ENCODE measurements at regions of chr4 and their contacts with region 1.

Region 1: DNA sequence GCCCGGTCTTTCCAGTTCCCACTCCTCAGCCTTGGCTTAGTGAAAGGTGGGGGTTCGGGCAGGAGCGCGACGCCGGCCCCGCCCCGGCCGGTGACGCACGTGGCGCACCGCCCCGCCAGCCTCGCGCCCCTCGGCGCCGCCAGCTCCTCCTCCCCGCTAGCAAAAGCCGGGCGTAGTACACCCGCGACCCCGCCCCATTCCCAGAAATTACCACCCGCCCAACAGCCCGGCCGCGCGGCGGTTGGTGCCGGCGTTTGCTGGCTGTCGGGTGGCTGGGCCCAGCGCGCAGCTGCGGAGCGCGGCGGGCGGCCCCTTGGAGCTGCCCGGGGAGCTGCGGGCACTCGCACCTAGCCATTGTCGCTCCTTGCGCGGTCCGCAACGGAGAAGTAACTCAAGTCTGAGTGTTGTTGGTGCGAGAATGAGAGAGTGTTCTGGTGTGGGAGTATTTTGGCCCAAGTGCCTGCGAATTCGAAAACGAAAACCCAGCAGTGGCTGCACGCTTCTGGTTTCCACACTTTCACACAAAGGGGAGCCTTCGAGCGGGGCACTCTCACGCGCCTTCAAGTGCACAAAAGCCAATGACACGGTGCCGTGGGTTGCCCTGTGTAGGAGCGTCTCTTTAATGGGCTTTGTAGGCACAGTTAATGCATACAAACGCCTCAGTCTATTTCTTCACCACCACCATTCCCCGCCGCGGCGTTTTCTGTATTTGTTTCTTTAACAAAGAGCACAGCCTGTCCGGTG is 1.0 kb upstream of the ELF2 start:
- DNase-seq: peak; percentile 84 to 98 (median 92)
- ATAC-seq: peak; percentile 84
- H3K4me3 ChIP-seq: peak overlapping the region; percentile 71
- H3K4me3 Mint-ChIP-seq: peak overlapping the region; percentile 86 to 95 (median 91)
- H3K27ac ChIP-seq: peak overlapping the region; percentile 86
- H3K27ac Mint-ChIP-seq: peak overlapping the region; percentile 90 to 97 (median 94)
- H3K4me1 ChIP-seq: peaks cover 0 to 11% of the 10 kb centered on the region in 2 donors
- H3K4me1 Mint-ChIP-seq: peaks cover 0 to 31% (median 17%) of the 10 kb centered on the region in 7 donors
- H3K27me3 ChIP-seq: no peaks in the 10 kb centered on the region
- H3K27me3 Mint-ChIP-seq: peaks cover 0 to 44% (median 0%) of the 10 kb centered on the region in 5 donors

Region 2: GRCh38 chr4:139015269-139015947 is 162.6 kb before region 1 on chr4 and contains the start of gene NOCT:
- CTCF ChIA-PET with region 1: no interaction called
- POLR2A ChIA-PET with region 1: interaction called, 4 read pairs
- intact Hi-C with region 1: loop called (anchors 1 kb)
- DNase-seq: peak; percentile 82 to 92 (median 89)
- ATAC-seq: peak; percentile 94
- H3K4me3 ChIP-seq: peak within 1 kb of the TSS; percentile 65
- H3K4me3 Mint-ChIP-seq: peak within 1 kb of the TSS; percentile 82 to 93 (median 88)
- H3K27ac ChIP-seq: peak within 1 kb of the TSS; percentile 91
- H3K27ac Mint-ChIP-seq: peak within 1 kb of the TSS; percentile 76 to 99 (median 94)
- H3K4me1 ChIP-seq: peaks cover 7 to 10% of the 10 kb centered on the region in 2 donors
- H3K4me1 Mint-ChIP-seq: peaks cover 14 to 44% (median 24%) of the 10 kb centered on the region in 7 donors
- H3K27me3 ChIP-seq: no peaks in the 10 kb centered on the region
- H3K27me3 Mint-ChIP-seq: no peaks in the 10 kb centered on the region
- total RNA-seq, gene NOCT: 1.6 to 33.7 (median 8.8) TPM

Region 3: DNA sequence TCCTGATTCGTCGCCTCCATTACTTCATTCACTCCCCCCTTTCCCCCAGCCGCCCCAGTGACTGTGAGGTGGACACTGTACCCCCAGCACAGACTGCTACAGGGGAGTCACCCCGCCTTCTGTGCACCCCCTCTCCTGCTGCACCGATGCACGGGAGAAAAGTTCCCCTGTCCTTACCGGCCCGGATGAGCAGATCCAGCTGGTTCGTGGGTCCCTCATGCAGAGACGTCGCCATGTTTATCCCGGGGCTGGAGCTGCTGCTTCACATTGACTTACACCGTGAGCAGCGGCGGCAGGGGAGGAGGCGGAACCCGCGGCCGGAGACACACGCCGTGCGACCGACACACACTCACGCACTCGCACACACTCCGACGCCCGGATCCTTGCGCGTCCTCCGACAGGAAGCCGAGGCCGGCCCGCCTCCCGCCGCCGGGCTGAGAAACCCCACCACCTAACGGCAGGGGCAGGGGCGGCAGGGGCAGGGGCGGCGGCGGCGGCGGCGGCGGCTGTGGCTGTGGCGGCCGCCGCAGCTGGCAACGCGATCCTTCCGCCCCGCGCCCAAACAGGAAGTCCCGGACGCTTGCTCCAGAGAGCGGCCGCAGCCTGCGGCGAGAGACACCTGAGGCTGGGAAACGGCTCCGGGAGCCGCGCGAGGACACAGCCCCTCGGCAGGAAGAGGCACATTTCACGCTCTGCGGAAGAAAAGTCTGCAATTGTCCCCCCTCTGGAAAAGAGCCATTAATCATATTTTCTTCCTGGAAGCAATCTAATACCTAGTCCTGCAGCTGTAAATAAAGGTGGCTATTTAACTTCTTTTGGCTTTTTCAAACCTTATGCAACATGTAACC is 93.9 kb before region 1 on chr4:
- CTCF ChIA-PET with region 1: no interaction called
- POLR2A ChIA-PET with region 1: interaction called, 18 read pairs
- intact Hi-C with region 1: loop called (anchors 1 kb)
- DNase-seq: peak; percentile 54 to 88 (median 84)
- ATAC-seq: peak; percentile 64
- H3K4me3 ChIP-seq: peak overlapping the region; percentile 99
- H3K4me3 Mint-ChIP-seq: peak overlapping the region; percentile 90 to 100 (median 92)
- H3K27ac ChIP-seq: peak overlapping the region; percentile 96
- H3K27ac Mint-ChIP-seq: peak overlapping the region; percentile 85 to 100 (median 96)
- H3K4me1 ChIP-seq: peaks cover 16 to 27% of the 10 kb centered on the region in 2 donors
- H3K4me1 Mint-ChIP-seq: peaks cover 16 to 49% (median 41%) of the 10 kb centered on the region in 7 donors
- H3K27me3 ChIP-seq: no peaks in the 10 kb centered on the region
- H3K27me3 Mint-ChIP-seq: no peaks in the 10 kb centered on the region

Region 4: GRCh38 chr4:139229534-139230039 is 51.5 kb after region 1 on chr4:
- CTCF ChIA-PET with region 1: interaction called, 3 read pairs
- POLR2A ChIA-PET with region 1: no interaction called
- intact Hi-C with region 1: loop called (anchors 1 to 2 kb)
- DNase-seq: peak in 7 of 9 donors; percentile 11 to 58 (median 37)
- ATAC-seq: peak; percentile 84
- H3K4me3 ChIP-seq: no peak overlapping the region
- H3K4me3 Mint-ChIP-seq: no peak overlapping the region
- H3K27ac ChIP-seq: no peak overlapping the region
- H3K27ac Mint-ChIP-seq: no peak overlapping the region
- H3K4me1 ChIP-seq: no peaks in the 10 kb centered on the region
- H3K4me1 Mint-ChIP-seq: peaks cover 0 to 7% (median 4%) of the 10 kb centered on the region in 7 donors
- H3K27me3 ChIP-seq: no peaks in the 10 kb centered on the region
- H3K27me3 Mint-ChIP-seq: no peaks in the 10 kb centered on the region

Region 5: GRCh38 chr4:139295206-139295941 is 117.3 kb after region 1 on chr4:
- CTCF ChIA-PET with region 1: interaction called, 4 read pairs
- POLR2A ChIA-PET with region 1: interaction called, 20 read pairs
- intact Hi-C with region 1: loop called (anchors 1 kb)
- DNase-seq: peak; percentile 90 to 99 (median 94)
- ATAC-seq: peak; percentile 99
- H3K4me3 ChIP-seq: peak overlapping the region; percentile 97
- H3K4me3 Mint-ChIP-seq: peak overlapping the region; percentile 86 to 100 (median 96)
- H3K27ac ChIP-seq: peak overlapping the region; percentile 94
- H3K27ac Mint-ChIP-seq: peak overlapping the region; percentile 93 to 100 (median 97)
- H3K4me1 ChIP-seq: peaks cover 13 to 28% of the 10 kb centered on the region in 2 donors
- H3K4me1 Mint-ChIP-seq: peaks cover 2 to 62% (median 40%) of the 10 kb centered on the region in 7 donors
- H3K27me3 ChIP-seq: no peaks in the 10 kb centered on the region
- H3K27me3 Mint-ChIP-seq: no peaks in the 10 kb centered on the region

Region 6: GRCh38 chr4:139656614-139657486 is 478.8 kb after region 1 on chr4:
- CTCF ChIA-PET with region 1: no interaction called
- POLR2A ChIA-PET with region 1: no interaction called
- intact Hi-C with region 1: loop called in 1 of 2 experiments (anchors 5 kb)
- DNase-seq: peak in 8 of 9 donors; percentile 29 to 67 (median 56)
- ATAC-seq: peak; percentile 87
- H3K4me3 ChIP-seq: no peak overlapping the region
- H3K4me3 Mint-ChIP-seq: peak overlapping the region in 8 of 10 donors; percentile 5 to 86 (median 22)
- H3K27ac ChIP-seq: no peak overlapping the region
- H3K27ac Mint-ChIP-seq: peak overlapping the region in 5 of 9 donors; percentile 31 to 98 (median 87)
- H3K4me1 ChIP-seq: peaks cover 0 to 5% of the 10 kb centered on the region in 2 donors
- H3K4me1 Mint-ChIP-seq: peaks cover 17 to 41% (median 18%) of the 10 kb centered on the region in 7 donors
- H3K27me3 ChIP-seq: no peaks in the 10 kb centered on the region
- H3K27me3 Mint-ChIP-seq: peaks cover 0 to 5% (median 5%) of the 10 kb centered on the region in 5 donors

Region 7: DNA sequence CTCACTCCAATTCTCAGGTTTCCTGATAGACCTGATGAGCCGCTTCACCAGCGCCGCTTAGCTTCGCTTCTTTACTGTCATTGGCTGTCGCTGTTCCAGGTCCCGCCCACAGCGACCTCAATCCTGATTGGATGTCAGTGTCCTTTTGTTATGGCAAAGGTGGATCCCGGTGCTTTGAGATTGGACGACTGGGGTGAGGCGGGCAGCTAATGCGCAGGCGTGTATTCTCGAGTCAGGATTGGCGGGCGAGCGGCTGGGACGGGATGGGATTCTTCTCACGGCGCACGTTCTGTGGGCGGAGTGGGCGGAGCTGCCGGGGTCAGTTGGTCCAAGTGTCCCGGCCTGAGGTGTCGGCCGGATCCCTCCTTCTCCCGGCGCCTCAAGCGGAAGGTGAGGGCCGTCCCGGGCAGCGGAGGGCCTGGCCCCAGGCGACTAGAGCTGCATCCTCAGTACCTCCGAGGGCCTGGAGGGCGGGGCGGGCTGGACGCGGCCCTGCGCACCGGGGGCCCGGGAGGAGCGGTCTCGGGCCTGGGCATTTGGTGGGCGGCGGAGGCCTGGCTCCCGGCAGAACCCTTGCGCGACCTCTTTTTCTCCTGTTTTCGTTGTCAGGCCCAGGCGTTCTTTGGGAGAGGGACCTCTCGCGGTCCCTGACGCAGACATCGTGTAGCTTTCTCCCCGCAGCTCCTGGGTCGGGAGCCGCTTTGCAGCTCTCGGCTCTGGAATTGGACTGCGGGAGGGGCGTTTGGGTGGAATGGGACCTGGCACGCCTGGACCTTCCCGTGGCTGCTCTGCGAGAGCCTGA is 1195.5 kb after region 1 on chr4 and contains the start of gene SCOC:
- CTCF ChIA-PET with region 1: no interaction called
- POLR2A ChIA-PET with region 1: no interaction called
- intact Hi-C with region 1: loop called in 1 of 2 experiments (anchors 2 kb)
- DNase-seq: peak; percentile 80 to 98 (median 95)
- ATAC-seq: peak; percentile 98
- H3K4me3 ChIP-seq: peak within 1 kb of the TSS; percentile 79
- H3K4me3 Mint-ChIP-seq: peak within 1 kb of the TSS in 2 of 10 donors; percentile 87 to 90
- H3K27ac ChIP-seq: peak within 1 kb of the TSS; percentile 86
- H3K27ac Mint-ChIP-seq: peak within 1 kb of the TSS in 5 of 9 donors; percentile 47 to 90 (median 51)
- H3K4me1 ChIP-seq: peaks cover 6 to 7% of the 10 kb centered on the region in 2 donors
- H3K4me1 Mint-ChIP-seq: peaks cover 29 to 49% (median 43%) of the 10 kb centered on the region in 7 donors
- H3K27me3 ChIP-seq: no peaks in the 10 kb centered on the region
- H3K27me3 Mint-ChIP-seq: peaks cover 0 to 17% (median 0%) of the 10 kb centered on the region in 5 donors
- total RNA-seq, gene SCOC: 9.3 to 26.3 (median 22.6) TPM